Right ventricle myocardium inferior (tissue), 1 donor: ENCODE measurements at regions of chr5 and their contacts with region 1.

Region 1: GRCh38 chr5:163437309-163438182 is at the start of gene CCNG1:
- DNase-seq: peak; percentile 96
- ATAC-seq: peak; percentile 98
- total RNA-seq, gene CCNG1: 94.2 TPM

Region 2: DNA sequence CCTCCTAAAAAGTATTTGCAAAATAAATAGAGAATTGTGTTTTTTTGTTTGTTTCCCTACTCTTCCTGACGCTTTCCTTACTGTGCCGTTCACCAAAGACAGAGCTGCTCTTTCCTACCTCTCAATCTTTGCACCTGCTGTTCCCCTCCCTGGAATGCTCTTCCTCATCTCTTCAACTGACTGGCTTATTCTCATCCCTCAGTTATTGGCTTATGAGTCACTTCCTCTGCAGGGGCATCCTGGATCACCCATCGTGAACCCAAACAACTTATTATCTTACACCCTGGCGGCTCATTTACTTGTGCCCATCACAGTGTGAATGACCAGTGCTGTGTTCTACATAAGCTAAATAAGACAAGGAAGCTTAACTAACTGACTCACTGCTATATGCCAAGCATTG is 36.3 kb before region 1 on chr5:
- intact Hi-C with region 1: no loop called
- DNase-seq: no peak
- ATAC-seq: no peak

Region 3: DNA sequence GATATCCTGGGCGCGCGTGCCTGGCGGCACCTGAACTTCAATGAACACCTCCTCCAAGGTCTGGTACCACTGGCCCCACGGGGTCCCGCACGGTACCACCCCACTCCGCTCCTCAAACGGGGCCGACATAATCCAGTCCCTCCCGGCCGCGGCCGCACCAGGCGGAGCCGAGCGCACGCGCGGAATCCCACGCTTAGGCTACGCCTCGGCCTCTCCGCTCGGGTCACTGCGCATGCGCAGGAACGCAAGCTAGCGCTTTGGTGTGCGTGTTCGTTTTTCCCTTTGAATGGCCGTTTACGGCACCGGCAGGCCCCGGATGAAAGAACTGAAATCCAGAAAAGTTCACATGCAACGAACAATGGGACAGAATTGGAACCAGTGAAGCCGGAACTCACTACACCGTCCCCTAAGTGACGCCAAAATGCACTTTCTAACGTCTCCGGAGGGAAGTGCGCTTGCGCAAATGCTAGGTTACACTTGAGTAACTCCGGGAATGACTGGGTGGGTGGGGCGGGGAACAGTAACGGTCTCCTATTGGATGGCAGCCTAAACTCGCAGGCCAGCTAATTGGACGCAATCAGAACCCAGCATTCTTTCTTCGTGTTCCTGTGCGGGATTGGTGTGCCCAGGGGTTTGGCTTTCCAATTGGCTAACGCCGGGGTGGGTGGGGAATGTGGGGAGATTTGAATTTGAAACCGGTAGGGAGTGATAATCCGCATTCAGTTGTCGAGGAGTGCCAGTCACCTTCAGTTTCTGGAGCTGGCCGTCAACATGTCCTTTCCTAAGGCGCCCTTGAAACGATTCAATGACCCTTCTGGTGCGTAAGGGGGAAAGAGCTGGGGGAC is 22.6 kb after region 1 on chr5 and contains the starts of genes HMMR and NUDCD2:
- intact Hi-C with region 1: loop called (anchors 2 kb)
- DNase-seq: peak; percentile 99
- ATAC-seq: peak; percentile 97
- total RNA-seq, gene HMMR: 0.92 TPM
- total RNA-seq, gene NUDCD2: 11.8 TPM